Activated CD4-positive, alpha-beta memory T cell treated with anti-CD3 and anti-CD28 coated beads for 36 hours (primary cell): ENCODE measurements at regions of chr4 and their contacts with region 1.

Region 1: GRCh38 chr4:15375667-15376066 is 52.2 kb upstream of the C1QTNF7 start:
- DNase-seq: no peak
- H3K4me3 Mint-ChIP-seq: no peak overlapping the region
- H3K27ac Mint-ChIP-seq: no peak overlapping the region
- H3K4me1 Mint-ChIP-seq: peaks cover 10% of the 10 kb centered on the region
- H3K27me3 Mint-ChIP-seq: no peaks in the 10 kb centered on the region

Region 2: DNA sequence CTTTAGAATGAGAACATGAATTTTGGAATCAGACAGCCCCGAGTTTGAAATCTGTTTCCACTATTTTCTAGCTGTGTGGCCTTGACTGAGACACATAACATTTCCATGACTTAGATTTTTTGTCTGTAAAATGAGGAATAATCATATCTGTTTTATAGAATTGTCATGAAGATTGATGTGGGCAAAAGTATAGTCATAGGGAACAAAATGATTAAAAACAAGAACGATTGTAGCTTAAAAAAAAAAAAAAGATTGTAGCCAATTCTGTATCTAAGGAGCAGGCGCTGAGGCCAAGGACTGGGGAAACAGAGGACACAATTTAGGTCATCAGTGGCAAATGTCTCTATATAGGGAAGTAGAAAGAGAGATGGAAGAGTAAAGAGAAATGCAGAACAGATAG is 149.5 kb before region 1 on chr4:
- CTCF ChIA-PET with region 1: no interaction called
- POLR2A ChIA-PET with region 1: no interaction called
- intact Hi-C with region 1: no loop called
- DNase-seq: no peak
- H3K4me3 Mint-ChIP-seq: no peak overlapping the region
- H3K27ac Mint-ChIP-seq: no peak overlapping the region
- H3K4me1 Mint-ChIP-seq: no peaks in the 10 kb centered on the region
- H3K27me3 Mint-ChIP-seq: no peaks in the 10 kb centered on the region

Region 3: DNA sequence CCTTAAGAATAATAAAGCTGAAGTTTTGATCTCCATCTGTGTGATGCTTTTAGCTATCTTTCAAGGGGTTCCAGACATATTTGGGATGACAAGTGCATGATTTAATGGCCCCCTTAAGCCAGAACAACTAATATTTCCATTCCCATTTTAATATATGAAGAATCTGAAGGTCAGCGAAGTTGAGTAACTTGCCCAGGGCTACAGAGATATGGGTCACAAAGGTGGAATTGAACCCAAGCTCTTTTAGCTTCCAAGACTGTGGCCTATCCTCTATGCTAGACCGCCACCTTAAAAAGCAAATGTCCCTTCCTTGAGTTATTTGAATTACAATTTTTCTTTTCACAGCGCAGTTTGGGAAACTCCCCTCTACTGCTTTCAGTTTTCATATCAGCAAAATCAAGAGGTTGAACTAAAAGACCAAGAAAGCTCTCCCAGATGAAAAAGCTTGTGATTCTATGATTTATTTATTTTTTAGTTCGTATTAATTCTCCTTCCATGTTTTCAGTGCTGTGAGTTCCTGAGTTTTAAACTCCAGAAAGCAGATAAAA is 122.4 kb before region 1 on chr4:
- CTCF ChIA-PET with region 1: no interaction called
- POLR2A ChIA-PET with region 1: no interaction called
- intact Hi-C with region 1: loop called (anchors 5 kb)
- DNase-seq: no peak
- H3K4me3 Mint-ChIP-seq: no peak overlapping the region
- H3K27ac Mint-ChIP-seq: no peak overlapping the region
- H3K4me1 Mint-ChIP-seq: no peaks in the 10 kb centered on the region
- H3K27me3 Mint-ChIP-seq: no peaks in the 10 kb centered on the region

Region 4: GRCh38 chr4:15344041-15344440 is 31.6 kb before region 1 on chr4:
- CTCF ChIA-PET with region 1: no interaction called
- POLR2A ChIA-PET with region 1: no interaction called
- intact Hi-C with region 1: no loop called
- DNase-seq: no peak
- H3K4me3 Mint-ChIP-seq: no peak overlapping the region
- H3K27ac Mint-ChIP-seq: no peak overlapping the region
- H3K4me1 Mint-ChIP-seq: no peaks in the 10 kb centered on the region
- H3K27me3 Mint-ChIP-seq: peaks cover 3% of the 10 kb centered on the region

Region 5: GRCh38 chr4:15681207-15682015 is 305.7 kb after region 1 on chr4 and contains the start of gene FAM200B:
- CTCF ChIA-PET with region 1: no interaction called
- POLR2A ChIA-PET with region 1: no interaction called
- intact Hi-C with region 1: no loop called
- DNase-seq: peak; percentile 99
- H3K4me3 Mint-ChIP-seq: peak within 1 kb of the TSS; percentile 99
- H3K27ac Mint-ChIP-seq: peak within 1 kb of the TSS; percentile 95
- H3K4me1 Mint-ChIP-seq: peaks cover 29% of the 10 kb centered on the region
- H3K27me3 Mint-ChIP-seq: no peaks in the 10 kb centered on the region
- total RNA-seq, gene FAM200B: 8.3 to 8.9 TPM